PC-9 (cell line): ENCODE measurements at regions of chr12 and their contacts with region 1.

Region 1: DNA sequence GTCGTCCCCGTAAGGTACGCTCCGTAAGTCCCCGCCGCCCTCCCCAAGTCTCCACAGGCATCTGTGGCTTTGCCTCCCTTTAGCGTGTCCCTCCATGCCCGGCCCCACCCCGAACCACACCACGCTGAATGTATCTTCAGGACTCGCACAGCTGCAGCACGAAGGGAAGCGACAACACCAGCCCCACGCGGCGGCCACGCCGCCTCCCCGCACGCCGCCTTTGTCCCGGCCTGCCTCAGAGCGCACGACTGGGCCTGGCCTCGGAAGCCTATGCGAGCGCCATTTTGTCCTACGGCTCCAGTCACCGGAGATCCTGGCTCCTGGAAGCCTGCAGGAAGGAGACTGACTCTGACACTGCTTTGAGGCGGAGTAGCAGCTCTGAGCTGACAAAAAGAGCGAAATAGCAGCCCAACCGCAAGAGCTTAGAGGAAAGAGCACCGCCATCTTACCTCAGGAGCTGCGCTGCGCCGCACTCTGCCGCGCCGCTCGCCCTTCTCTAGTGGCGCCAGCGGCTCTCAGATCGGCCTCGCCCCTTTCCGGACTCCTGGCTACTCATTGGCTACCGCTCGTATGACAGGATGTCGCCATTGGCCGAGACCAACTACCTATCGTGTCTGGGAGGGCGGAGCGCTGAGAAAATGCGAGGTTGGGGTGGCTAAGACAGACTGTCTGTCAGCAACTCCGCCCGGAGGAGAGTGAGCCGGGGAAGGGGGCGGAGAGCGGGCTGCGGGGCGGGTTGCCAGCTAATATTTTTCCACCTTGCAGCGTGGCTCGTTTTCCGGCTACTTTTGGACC is at the start of gene KANSL2:
- DNase-seq: peak; percentile 97
- H3K4me3 ChIP-seq: peak within 1 kb of the TSS; percentile 77
- H3K27ac ChIP-seq: peak within 1 kb of the TSS; percentile 50; the same call in 1 of the 2 replicates
- H3K4me1 ChIP-seq: peaks cover 30% of the 10 kb centered on the region
- H3K27me3 ChIP-seq: no peaks in the 10 kb centered on the region
- CTCF ChIP-seq: no peak
- total RNA-seq, gene KANSL2: 21.8 and 28.2 TPM in 2 replicates

Region 2: DNA sequence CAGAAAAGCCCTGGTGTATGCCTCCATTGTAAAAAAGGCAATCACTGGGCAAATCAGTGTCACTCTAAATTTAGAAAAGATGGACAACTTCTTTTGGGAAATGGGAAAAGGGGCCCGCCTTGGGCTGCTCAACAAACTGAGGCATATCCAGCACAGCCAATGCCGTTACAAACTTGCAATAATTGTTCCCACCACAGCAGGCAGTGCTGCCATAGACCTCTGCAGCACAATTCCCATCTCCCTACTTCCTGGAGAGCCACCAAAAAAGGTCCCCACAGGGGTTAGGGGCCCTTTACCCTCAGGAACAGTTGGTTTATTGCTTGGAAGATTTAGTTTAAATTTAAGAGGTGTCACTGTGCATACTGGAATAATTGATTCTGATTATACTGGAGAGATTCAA is 172.9 kb before region 1 on chr12:
- CTCF ChIA-PET with region 1: no interaction called
- POLR2A ChIA-PET with region 1: no interaction called
- intact Hi-C with region 1: no loop called
- DNase-seq: no peak
- H3K4me3 ChIP-seq: no peak overlapping the region
- H3K27ac ChIP-seq: no peak overlapping the region
- H3K4me1 ChIP-seq: no peaks in the 10 kb centered on the region
- H3K27me3 ChIP-seq: peaks cover 60% of the 10 kb centered on the region
- CTCF ChIP-seq: no peak

Region 3: GRCh38 chr12:48542300-48542928 is 139.5 kb before region 1 on chr12:
- CTCF ChIA-PET with region 1: no interaction called
- POLR2A ChIA-PET with region 1: interaction called, 14 read pairs
- intact Hi-C with region 1: no loop called
- DNase-seq: peak in 1 of 2 experiments; percentile 24
- H3K4me3 ChIP-seq: no peak overlapping the region
- H3K27ac ChIP-seq: no peak overlapping the region
- H3K4me1 ChIP-seq: peaks cover 17% of the 10 kb centered on the region; the same call in 1 of the 2 replicates
- H3K27me3 ChIP-seq: peaks cover 6% of the 10 kb centered on the region; the same call in 1 of the 2 replicates
- CTCF ChIP-seq: peak; percentile 57

Region 4: GRCh38 chr12:48631057-48631456 is 50.9 kb before region 1 on chr12:
- CTCF ChIA-PET with region 1: no interaction called
- POLR2A ChIA-PET with region 1: no interaction called
- intact Hi-C with region 1: no loop called
- DNase-seq: peak; percentile 11 to 39
- H3K4me3 ChIP-seq: no peak overlapping the region
- H3K27ac ChIP-seq: no peak overlapping the region
- H3K4me1 ChIP-seq: no peaks in the 10 kb centered on the region
- H3K27me3 ChIP-seq: peaks cover 15% of the 10 kb centered on the region; the same call in 1 of the 2 replicates
- CTCF ChIP-seq: no peak

Region 5: DNA sequence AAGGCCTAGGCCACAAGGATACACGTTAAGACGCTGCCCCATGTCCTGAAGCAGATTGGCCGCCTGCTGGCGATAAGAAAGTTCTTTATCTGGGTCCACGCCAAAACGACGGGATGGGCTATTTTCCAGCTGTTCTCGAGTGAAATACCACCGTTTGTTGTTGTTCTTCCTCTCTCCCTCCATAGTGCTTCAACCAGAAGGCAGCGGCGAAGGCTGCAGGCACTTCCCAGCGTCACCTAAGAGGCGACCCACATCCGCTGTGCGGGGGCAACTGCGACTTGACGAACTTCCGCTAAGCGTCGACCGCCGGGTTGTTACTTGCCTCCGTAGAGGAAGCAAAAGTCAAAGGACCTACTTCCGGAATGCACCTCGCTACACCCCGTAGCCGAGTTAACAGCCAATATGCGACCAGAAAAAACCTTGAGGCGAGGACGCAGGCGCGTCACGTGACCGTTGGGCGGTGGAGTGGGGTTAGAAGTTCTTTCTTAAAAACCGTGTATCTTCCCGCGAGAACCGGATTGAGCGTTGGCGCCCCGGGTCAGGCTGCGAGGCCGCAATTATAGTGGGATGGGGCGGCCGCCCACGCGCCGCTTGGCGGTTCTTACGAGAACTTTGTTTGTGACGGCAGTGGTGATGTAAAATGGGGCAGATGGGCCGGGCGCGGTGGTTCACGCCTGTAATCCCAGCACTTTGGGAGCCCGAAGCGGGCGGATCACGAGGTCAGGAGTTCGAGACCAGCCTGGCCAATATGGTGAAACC is 34.7 kb after region 1 on chr12 and contains the start of gene CCNT1:
- CTCF ChIA-PET with region 1: no interaction called
- POLR2A ChIA-PET with region 1: no interaction called
- intact Hi-C with region 1: loop called (anchors 2 kb)
- DNase-seq: peak; percentile 98 to 99
- H3K4me3 ChIP-seq: peak within 1 kb of the TSS; percentile 96
- H3K27ac ChIP-seq: peak within 1 kb of the TSS; percentile 85
- H3K4me1 ChIP-seq: peaks cover 15% of the 10 kb centered on the region
- H3K27me3 ChIP-seq: no peaks in the 10 kb centered on the region
- CTCF ChIP-seq: peak; percentile 10; the same call in 1 of the 2 replicates
- total RNA-seq, gene CCNT1: 20.3 and 50.8 TPM in 2 replicates

Region 6: GRCh38 chr12:48795480-48796455 is 113.8 kb after region 1 on chr12:
- CTCF ChIA-PET with region 1: no interaction called
- POLR2A ChIA-PET with region 1: no interaction called
- intact Hi-C with region 1: loop called (anchors 5 kb)
- DNase-seq: peak; percentile 57 to 67
- H3K4me3 ChIP-seq: no peak overlapping the region
- H3K27ac ChIP-seq: peak overlapping the region; percentile 78
- H3K4me1 ChIP-seq: peaks cover 21% of the 10 kb centered on the region
- H3K27me3 ChIP-seq: no peaks in the 10 kb centered on the region
- CTCF ChIP-seq: peak; percentile 99